ENCODE measurements at regions of chr19 and their contacts with region 1.

Region 1: DNA sequence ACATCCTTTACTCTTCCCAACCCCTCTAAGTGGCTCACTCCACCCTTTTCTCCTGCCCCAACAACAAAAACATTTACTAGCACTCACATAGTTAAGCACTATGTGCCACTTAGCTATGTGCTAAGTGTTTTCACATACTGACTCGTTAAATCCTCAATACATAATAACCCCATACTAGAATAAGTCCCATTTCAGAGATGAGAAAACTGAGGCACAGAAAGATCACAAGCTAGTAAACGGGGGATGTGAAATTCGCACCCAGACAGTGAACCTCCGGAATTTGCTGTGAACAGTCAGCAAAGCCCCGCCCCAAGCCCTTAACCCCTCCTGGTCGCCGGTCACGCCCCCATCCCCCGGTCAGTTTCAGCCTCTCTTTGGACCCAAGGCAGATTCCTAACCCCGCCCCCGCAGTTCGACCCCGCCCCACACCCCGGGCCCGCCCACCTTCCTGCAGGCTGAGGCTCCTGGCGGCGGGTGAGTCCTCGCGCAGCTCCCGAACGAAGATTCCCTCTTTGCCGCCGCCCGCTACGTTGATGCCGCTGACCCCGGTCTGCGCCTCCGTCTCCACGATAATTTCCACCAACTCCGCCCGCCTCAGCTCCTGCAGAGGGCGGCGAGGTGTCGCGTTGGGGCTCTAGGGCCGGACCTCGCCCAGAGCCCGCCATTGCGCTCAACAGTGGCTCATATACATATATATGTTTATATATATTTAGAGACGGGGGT is 9.8 kb downstream of the PRX start:
- DNase-seq: peak; percentile 84
- ATAC-seq: peak; percentile 92
- H3K4me3 ChIP-seq: peak overlapping the region; percentile 82
- H3K27ac ChIP-seq: peak overlapping the region; percentile 78
- H3K4me1 ChIP-seq: no peaks in the 10 kb centered on the region; the same call in 1 of the 2 replicates
- H3K27me3 ChIP-seq: no peaks in the 10 kb centered on the region
- CTCF ChIP-seq: peak; percentile 6; the same call in 1 of the 2 replicates
- POLR2A ChIP-seq: no peak
- RAD21 ChIP-seq: no peak

Region 2: GRCh38 chr19:40381321-40381720 is 22.1 kb before region 1 on chr19:
- CTCF ChIA-PET with region 1: interaction called, 4 read pairs
- POLR2A ChIA-PET with region 1: interaction called, 12 read pairs
- dilution Hi-C with region 1: no loop called
- in situ Hi-C with region 1: no loop called
- intact Hi-C with region 1: no loop called
- DNase-seq: no peak
- ATAC-seq: no peak
- H3K4me3 ChIP-seq: no peak overlapping the region
- H3K27ac ChIP-seq: no peak overlapping the region
- H3K4me1 ChIP-seq: no peaks in the 10 kb centered on the region
- H3K27me3 ChIP-seq: no peaks in the 10 kb centered on the region; the same call in 1 of the 2 replicates
- CTCF ChIP-seq: no peak
- POLR2A ChIP-seq: no peak
- RAD21 ChIP-seq: no peak